Naive thymus-derived CD4-positive, alpha-beta T cell (primary cell): ENCODE measurements at regions of chr6 and their contacts with region 1.

Region 1: DNA sequence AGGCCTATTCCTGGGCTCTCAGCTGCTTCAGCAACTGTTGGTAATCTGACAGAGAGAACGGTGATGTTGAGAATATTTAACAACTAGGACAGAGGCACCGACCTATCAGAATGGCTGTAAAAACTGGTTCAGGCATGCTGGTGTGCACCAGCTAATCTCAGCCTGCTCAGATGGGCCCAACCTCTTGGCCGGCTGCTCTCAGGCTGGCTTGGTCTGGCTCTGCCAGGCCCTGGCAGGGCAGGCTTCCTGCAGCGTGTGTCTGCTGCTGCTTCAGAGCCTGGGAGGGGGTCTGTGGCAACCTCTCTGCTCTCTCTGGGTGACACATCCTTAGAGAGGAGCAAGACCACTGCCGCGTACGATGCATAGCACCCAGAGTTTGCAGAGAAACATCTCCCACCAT is 4.8 kb downstream of the SLC2A12 start:
- DNase-seq: no peak
- ATAC-seq: no peak
- H3K4me3 ChIP-seq: no peak overlapping the region
- H3K4me3 Mint-ChIP-seq: no peak overlapping the region
- H3K27ac ChIP-seq: no peak overlapping the region
- H3K27ac Mint-ChIP-seq: no peak overlapping the region
- H3K4me1 ChIP-seq: peaks cover 0 to 5% of the 10 kb centered on the region in 2 donors
- H3K4me1 Mint-ChIP-seq: peaks cover 6 to 13% (median 9%) of the 10 kb centered on the region in 7 donors
- H3K27me3 ChIP-seq: no peaks in the 10 kb centered on the region
- H3K27me3 Mint-ChIP-seq: peaks cover 5 to 15% (median 11%) of the 10 kb centered on the region in 5 donors

Region 2: DNA sequence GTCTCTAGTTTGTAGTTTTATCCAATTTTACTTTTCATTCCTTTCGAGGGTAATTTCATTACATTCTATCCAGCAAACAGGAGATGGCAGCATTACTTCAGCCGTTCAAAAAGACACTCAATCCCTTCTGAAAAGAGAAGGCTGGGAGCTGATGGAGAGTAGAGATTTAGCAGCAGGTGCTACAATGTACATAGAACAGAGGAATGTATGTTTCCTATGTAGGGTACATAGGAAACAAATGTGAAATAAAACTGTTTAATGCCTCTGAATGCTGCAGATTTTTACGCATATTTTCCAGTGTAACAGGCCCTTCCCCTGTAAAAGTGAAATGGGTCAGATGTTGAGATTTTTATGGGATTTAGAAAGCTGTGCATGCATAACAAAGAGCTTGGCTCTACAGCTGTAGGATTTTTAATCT is 1217.3 kb before region 1 on chr6:
- CTCF ChIA-PET with region 1: no interaction called
- POLR2A ChIA-PET with region 1: interaction called, 11 read pairs
- intact Hi-C with region 1: no loop called
- DNase-seq: no peak
- ATAC-seq: no peak
- H3K4me3 ChIP-seq: no peak overlapping the region
- H3K4me3 Mint-ChIP-seq: no peak overlapping the region
- H3K27ac ChIP-seq: no peak overlapping the region
- H3K27ac Mint-ChIP-seq: no peak overlapping the region
- H3K4me1 ChIP-seq: no peaks in the 10 kb centered on the region
- H3K4me1 Mint-ChIP-seq: no peaks in the 10 kb centered on the region
- H3K27me3 ChIP-seq: no peaks in the 10 kb centered on the region
- H3K27me3 Mint-ChIP-seq: peaks cover 0 to 6% (median 0%) of the 10 kb centered on the region in 5 donors

Region 3: DNA sequence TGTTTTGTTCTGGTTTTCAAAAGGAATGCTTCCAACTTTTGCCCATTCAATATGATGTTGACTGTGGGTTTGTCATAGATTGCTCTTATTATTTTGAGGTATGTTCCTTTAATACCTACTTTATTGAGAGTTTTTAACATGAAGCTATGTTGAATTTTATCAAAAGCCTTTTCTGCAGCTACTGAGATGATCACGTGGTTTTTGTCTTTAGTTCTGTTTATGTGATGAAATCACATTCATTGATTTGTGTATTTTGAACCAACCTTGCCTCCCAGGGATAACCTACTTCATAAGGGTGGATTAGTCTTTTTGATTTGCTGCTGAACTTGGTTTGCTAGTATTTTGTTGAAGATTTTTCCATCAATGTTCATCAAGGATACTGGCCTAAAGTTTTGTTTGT is 251.4 kb before region 1 on chr6:
- CTCF ChIA-PET with region 1: no interaction called
- POLR2A ChIA-PET with region 1: no interaction called
- intact Hi-C with region 1: no loop called
- DNase-seq: no peak
- ATAC-seq: no peak
- H3K4me3 ChIP-seq: no peak overlapping the region
- H3K4me3 Mint-ChIP-seq: no peak overlapping the region
- H3K27ac ChIP-seq: no peak overlapping the region
- H3K27ac Mint-ChIP-seq: no peak overlapping the region
- H3K4me1 ChIP-seq: no peaks in the 10 kb centered on the region
- H3K4me1 Mint-ChIP-seq: no peaks in the 10 kb centered on the region
- H3K27me3 ChIP-seq: no peaks in the 10 kb centered on the region
- H3K27me3 Mint-ChIP-seq: peaks cover 0 to 28% (median 7%) of the 10 kb centered on the region in 5 donors

Region 4: DNA sequence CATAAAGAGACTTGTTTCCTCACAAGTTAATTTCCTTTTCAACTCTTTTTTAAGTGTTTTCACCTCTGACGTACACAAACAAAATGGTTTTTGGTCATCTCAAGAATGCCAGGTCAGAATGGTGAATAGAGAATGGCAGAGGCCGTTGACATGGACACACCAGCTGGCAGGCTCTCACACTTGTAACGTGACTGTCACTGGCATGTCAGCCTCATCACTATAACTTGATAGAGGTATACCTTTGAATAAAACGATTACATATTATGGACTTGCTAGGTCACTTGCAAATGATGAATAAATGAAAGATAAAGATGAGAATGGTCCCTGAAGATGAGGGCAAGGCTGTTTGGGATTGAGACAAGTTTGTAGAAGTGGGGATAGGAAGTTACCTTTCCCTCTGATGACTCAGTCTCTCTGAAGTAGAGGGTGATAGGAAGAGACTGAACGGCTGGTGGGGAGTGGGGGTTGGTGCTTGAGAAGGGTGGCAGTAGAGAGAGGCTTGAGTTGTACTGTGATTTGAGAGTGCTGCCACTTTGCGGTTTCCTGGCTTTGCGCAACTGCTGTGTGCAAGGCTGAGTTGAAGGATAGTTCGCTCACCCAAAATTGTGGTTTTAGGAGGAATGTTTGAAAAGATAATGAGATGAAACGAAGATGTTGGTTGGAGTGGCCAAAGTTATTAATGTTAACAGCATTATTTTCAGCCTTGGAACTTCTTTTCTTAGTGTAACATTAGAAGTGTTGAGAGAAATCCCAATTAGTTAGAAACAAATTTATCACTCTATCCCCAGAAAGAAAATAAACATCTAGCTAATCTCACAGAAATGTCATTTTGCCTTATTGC is 64.4 kb before region 1 on chr6:
- CTCF ChIA-PET with region 1: no interaction called
- POLR2A ChIA-PET with region 1: interaction called, 4 read pairs
- intact Hi-C with region 1: loop called in 1 of 2 experiments (anchors 2 kb)
- DNase-seq: peak in 8 of 9 donors; percentile 28 to 50 (median 42)
- ATAC-seq: peak; percentile 95
- H3K4me3 ChIP-seq: no peak overlapping the region
- H3K4me3 Mint-ChIP-seq: peak overlapping the region; percentile 2 to 79 (median 48)
- H3K27ac ChIP-seq: no peak overlapping the region
- H3K27ac Mint-ChIP-seq: peak overlapping the region in 6 of 9 donors; percentile 5 to 70 (median 23)
- H3K4me1 ChIP-seq: peaks cover 0 to 12% of the 10 kb centered on the region in 2 donors
- H3K4me1 Mint-ChIP-seq: peaks cover 29 to 57% (median 42%) of the 10 kb centered on the region in 7 donors
- H3K27me3 ChIP-seq: no peaks in the 10 kb centered on the region
- H3K27me3 Mint-ChIP-seq: no peaks in the 10 kb centered on the region

Region 5: GRCh38 chr6:134063966-134064445 is 16.3 kb after region 1 on chr6:
- CTCF ChIA-PET with region 1: interaction called, 13 read pairs
- POLR2A ChIA-PET with region 1: no interaction called
- intact Hi-C with region 1: loop called in 1 of 2 experiments (anchors 1 kb)
- DNase-seq: peak; percentile 13 to 72 (median 56)
- ATAC-seq: peak; percentile 92
- H3K4me3 ChIP-seq: no peak overlapping the region
- H3K4me3 Mint-ChIP-seq: no peak overlapping the region
- H3K27ac ChIP-seq: no peak overlapping the region
- H3K27ac Mint-ChIP-seq: peak overlapping the region in 1 of 9 donors; percentile 36
- H3K4me1 ChIP-seq: no peaks in the 10 kb centered on the region
- H3K4me1 Mint-ChIP-seq: peaks cover 0 to 7% (median 0%) of the 10 kb centered on the region in 7 donors
- H3K27me3 ChIP-seq: no peaks in the 10 kb centered on the region
- H3K27me3 Mint-ChIP-seq: peaks cover 0 to 8% (median 0%) of the 10 kb centered on the region in 5 donors

Region 6: DNA sequence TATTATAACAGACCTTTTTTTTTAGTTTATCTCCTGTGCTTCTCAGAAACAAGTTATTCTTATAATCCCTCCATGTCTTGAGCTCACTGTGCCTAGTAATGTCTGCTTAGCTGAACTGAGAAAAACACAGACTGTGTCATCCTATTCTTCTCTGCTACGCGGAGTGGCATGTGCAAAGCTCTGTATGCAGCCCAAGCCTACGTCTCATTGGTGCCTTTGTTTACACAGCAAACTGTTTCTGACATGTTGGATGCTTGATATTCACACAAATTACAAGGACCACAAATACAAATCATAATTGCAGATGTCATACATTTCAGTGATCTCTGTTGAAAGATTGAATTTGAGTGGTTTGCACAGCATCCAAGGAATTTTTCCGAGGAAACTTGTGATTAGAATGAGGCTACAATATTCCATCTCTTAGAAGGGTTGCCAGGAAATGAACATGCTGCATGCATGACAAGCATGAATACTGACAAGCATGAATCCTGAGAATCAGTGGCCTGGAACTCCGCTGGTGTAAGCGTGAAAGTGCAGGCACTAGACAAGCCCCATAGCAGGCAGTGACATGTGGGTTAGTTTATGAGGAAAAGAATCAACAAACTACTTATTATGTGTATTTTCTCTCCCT is 398.7 kb after region 1 on chr6:
- CTCF ChIA-PET with region 1: no interaction called
- POLR2A ChIA-PET with region 1: no interaction called
- intact Hi-C with region 1: no loop called
- DNase-seq: no peak
- ATAC-seq: no peak
- H3K4me3 ChIP-seq: no peak overlapping the region
- H3K4me3 Mint-ChIP-seq: no peak overlapping the region
- H3K27ac ChIP-seq: no peak overlapping the region
- H3K27ac Mint-ChIP-seq: no peak overlapping the region
- H3K4me1 ChIP-seq: no peaks in the 10 kb centered on the region
- H3K4me1 Mint-ChIP-seq: peaks cover 0 to 16% (median 7%) of the 10 kb centered on the region in 7 donors
- H3K27me3 ChIP-seq: no peaks in the 10 kb centered on the region
- H3K27me3 Mint-ChIP-seq: no peaks in the 10 kb centered on the region